ENCODE measurements at regions of chr7 and their contacts with region 1.

Region 1: DNA sequence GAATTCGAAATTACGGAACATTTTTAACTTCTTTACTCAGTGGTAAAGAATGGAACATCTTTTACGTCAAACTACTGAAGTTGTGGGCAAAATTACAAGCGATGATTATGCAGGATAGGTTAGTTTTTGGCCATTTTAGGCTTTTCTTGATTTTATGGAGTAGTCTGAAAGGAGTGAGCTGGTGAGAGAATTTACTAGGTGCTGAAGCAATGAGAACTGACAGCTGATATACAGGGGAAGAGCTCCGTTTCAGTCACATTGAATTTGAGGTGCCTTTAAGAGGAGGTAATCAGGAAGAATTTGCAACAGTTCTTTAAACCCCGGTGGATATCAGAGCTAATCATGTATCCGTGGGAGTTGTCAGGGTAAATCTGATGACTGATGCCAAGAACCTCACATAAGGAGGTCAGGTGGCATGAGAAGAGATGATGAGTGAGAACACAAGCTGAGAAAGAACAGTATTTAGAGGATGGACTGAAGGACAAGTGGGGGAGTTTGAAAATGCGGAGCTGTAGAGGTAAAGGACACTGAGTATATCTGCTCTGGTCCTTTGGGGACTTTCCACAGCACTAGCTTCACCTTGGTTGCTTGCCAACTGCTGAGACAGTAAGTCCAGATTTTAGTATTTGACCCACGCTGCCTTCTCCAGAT is 104.3 kb downstream of the AHR start:
- DNase-seq: peak; percentile 90
- ATAC-seq: peak; percentile 91
- H3K4me3 ChIP-seq: peak overlapping the region; percentile 49
- H3K27ac ChIP-seq: peak overlapping the region; percentile 77
- H3K4me1 ChIP-seq: peaks cover 23% of the 10 kb centered on the region
- H3K27me3 ChIP-seq: no peaks in the 10 kb centered on the region
- CTCF ChIP-seq: no peak
- EP300 ChIP-seq: peak; percentile 24 to 60; a peak in 3 of 4 replicates
- POLR2A ChIP-seq: no peak
- RAD21 ChIP-seq: no peak

Region 2: DNA sequence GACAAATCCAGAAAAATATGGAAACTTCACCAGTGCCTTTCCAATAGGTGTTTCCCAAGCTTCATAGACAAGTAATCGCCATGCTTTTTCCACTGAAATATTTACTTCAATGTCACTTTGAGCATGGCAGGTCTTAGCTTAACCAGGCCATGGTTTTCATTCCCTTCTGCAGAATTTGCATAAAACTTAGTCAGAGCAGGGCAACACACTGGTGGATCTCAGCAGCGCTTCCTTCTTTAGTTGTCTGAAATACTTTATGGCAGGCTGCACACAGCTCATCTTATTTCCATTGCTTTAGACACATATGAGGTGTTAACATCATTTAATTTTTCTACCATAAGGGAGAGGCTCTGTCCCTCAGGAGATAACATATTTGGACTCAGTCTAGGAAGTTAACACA is 207.2 kb before region 1 on chr7:
- CTCF ChIA-PET with region 1: no interaction called
- POLR2A ChIA-PET with region 1: no interaction called
- RAD21 ChIA-PET with region 1: no interaction called
- SMC1A ChIA-PET with region 1: no interaction called
- in situ Hi-C with region 1: no loop called
- intact Hi-C with region 1: no loop called
- DNase-seq: no peak
- ATAC-seq: peak; percentile 81
- H3K4me3 ChIP-seq: no peak overlapping the region
- H3K27ac ChIP-seq: no peak overlapping the region
- H3K4me1 ChIP-seq: 0 out of 2 replicates have a peak, but pooled peaks cover 3% of the 10 kb centered on the region
- H3K27me3 ChIP-seq: no peaks in the 10 kb centered on the region
- CTCF ChIP-seq: no peak
- EP300 ChIP-seq: no peak
- POLR2A ChIP-seq: no peak
- RAD21 ChIP-seq: no peak

Region 3: GRCh38 chr7:17304926-17305325 is 97.8 kb before region 1 on chr7:
- CTCF ChIA-PET with region 1: interaction called, 29 read pairs
- POLR2A ChIA-PET with region 1: interaction called, 3 read pairs
- RAD21 ChIA-PET with region 1: interaction called, 19 read pairs
- SMC1A ChIA-PET with region 1: interaction called, 34 read pairs
- in situ Hi-C with region 1: no loop called
- intact Hi-C with region 1: loop called (anchors 2 kb)
- DNase-seq: no peak
- ATAC-seq: peak; percentile 25
- H3K4me3 ChIP-seq: no peak overlapping the region
- H3K27ac ChIP-seq: no peak overlapping the region
- H3K4me1 ChIP-seq: peaks cover 3% of the 10 kb centered on the region
- H3K27me3 ChIP-seq: no peaks in the 10 kb centered on the region
- CTCF ChIP-seq: no peak
- EP300 ChIP-seq: no peak
- POLR2A ChIP-seq: no peak
- RAD21 ChIP-seq: no peak

Region 4: DNA sequence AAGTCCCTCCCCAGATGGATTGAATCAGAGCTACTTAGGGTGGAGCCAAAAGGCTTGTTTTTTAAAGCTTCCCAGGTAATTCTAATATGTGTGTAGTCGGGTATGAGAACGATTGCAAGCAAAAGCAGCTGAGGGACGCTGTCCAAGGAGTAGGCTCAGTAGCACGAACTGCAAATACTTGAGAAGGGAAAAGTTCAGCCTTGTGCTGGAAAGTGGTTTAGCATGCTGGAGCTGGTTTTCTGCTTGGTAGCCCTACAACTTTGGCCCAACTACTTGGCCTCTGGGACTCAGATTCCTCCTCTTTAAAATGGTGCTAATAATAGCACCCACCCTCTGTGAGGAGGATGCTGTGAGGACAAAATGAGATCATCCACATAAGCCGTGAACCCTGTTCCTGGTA is 28.1 kb before region 1 on chr7:
- CTCF ChIA-PET with region 1: interaction called, 9 read pairs
- POLR2A ChIA-PET with region 1: interaction called, 10 read pairs
- RAD21 ChIA-PET with region 1: interaction called, 14 read pairs
- SMC1A ChIA-PET with region 1: interaction called, 20 read pairs
- in situ Hi-C with region 1: no loop called
- intact Hi-C with region 1: no loop called
- DNase-seq: no peak
- ATAC-seq: peak; percentile 29
- H3K4me3 ChIP-seq: no peak overlapping the region
- H3K27ac ChIP-seq: no peak overlapping the region
- H3K4me1 ChIP-seq: no peaks in the 10 kb centered on the region
- H3K27me3 ChIP-seq: no peaks in the 10 kb centered on the region
- CTCF ChIP-seq: no peak
- EP300 ChIP-seq: no peak
- POLR2A ChIP-seq: no peak
- RAD21 ChIP-seq: no peak

Region 5: GRCh38 chr7:17391366-17391765 is 11.4 kb before region 1 on chr7:
- CTCF ChIA-PET with region 1: no interaction called
- POLR2A ChIA-PET with region 1: interaction called, 8 read pairs
- RAD21 ChIA-PET with region 1: no interaction called
- SMC1A ChIA-PET with region 1: interaction called, 23 read pairs
- in situ Hi-C with region 1: no loop called
- intact Hi-C with region 1: no loop called
- DNase-seq: no peak
- ATAC-seq: no peak
- H3K4me3 ChIP-seq: no peak overlapping the region
- H3K27ac ChIP-seq: no peak overlapping the region
- H3K4me1 ChIP-seq: no peaks in the 10 kb centered on the region
- H3K27me3 ChIP-seq: no peaks in the 10 kb centered on the region
- CTCF ChIP-seq: no peak
- EP300 ChIP-seq: no peak
- POLR2A ChIP-seq: no peak
- RAD21 ChIP-seq: no peak

Region 6: DNA sequence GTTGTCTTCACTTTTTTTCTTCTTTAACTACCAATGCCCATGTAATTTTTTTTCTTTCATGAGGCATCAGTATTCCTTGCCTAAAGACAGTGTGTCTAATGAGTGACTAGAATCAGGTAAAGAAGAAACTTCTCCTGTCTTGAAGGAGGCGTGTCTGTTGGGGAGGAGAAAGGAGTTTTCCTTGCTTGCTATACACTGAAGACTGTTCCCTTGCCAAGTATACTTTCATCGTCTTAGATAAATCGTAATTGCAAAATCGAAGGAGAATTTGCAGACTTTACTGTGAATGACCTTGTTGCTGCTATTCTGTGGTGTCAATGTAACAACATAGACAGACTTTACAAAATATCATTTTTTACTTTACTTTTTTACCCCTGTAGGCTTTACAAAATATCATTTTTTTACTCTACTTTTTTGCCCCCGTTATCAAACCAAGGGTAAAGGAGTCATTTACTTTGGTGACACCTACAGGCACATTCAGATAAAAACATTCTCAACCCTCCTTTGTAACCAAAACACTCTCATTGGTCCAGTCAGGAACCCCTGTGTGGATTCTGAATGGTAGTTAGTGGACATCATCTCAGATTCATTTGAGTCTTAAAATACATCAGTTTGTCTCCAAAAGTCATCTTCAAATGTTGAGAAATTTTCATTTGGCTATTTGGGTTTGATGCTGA is 128.1 kb after region 1 on chr7:
- CTCF ChIA-PET with region 1: no interaction called
- POLR2A ChIA-PET with region 1: no interaction called
- RAD21 ChIA-PET with region 1: interaction called, 6 read pairs
- SMC1A ChIA-PET with region 1: interaction called, 6 read pairs
- in situ Hi-C with region 1: no loop called
- intact Hi-C with region 1: loop called (anchors 2 kb)
- DNase-seq: peak; percentile 19
- ATAC-seq: peak; percentile 93
- H3K4me3 ChIP-seq: no peak overlapping the region
- H3K27ac ChIP-seq: no peak overlapping the region
- H3K4me1 ChIP-seq: no peaks in the 10 kb centered on the region
- H3K27me3 ChIP-seq: no peaks in the 10 kb centered on the region; a peak in 1 of 4 replicates
- CTCF ChIP-seq: peak; percentile 14 to 57 (median 29); a peak in 3 of 6 replicates
- EP300 ChIP-seq: no peak
- POLR2A ChIP-seq: no peak
- RAD21 ChIP-seq: peak; percentile 79

Measured in GM12878 (cell line).